ENCODE measurements at regions of chr10 and their contacts with region 1.

Region 1: GRCh38 chr10:10831085-10831484 is 186.6 kb upstream of the CELF2 start:
- DNase-seq: peak; percentile 96
- H3K4me3 ChIP-seq: peak overlapping the region in 1 of 3 experiments; percentile 2
- H3K27ac ChIP-seq: peak overlapping the region; percentile 98
- H3K4me1 ChIP-seq: peaks cover 23% of the 10 kb centered on the region
- H3K27me3 ChIP-seq: no peaks in the 10 kb centered on the region
- CTCF ChIP-seq: no peak
- POLR2A ChIP-seq: no peak

Region 2: GRCh38 chr10:10499839-10500238 is 331.2 kb before region 1 on chr10:
- CTCF ChIA-PET with region 1: no interaction called
- POLR2A ChIA-PET with region 1: no interaction called
- dilution Hi-C with region 1: no loop called
- intact Hi-C with region 1: loop called (anchors 5 kb)
- DNase-seq: peak; percentile 61
- H3K4me3 ChIP-seq: no peak overlapping the region
- H3K27ac ChIP-seq: no peak overlapping the region
- H3K4me1 ChIP-seq: peaks cover 4% of the 10 kb centered on the region
- H3K27me3 ChIP-seq: no peaks in the 10 kb centered on the region
- CTCF ChIP-seq: no peak
- POLR2A ChIP-seq: no peak

Region 3: DNA sequence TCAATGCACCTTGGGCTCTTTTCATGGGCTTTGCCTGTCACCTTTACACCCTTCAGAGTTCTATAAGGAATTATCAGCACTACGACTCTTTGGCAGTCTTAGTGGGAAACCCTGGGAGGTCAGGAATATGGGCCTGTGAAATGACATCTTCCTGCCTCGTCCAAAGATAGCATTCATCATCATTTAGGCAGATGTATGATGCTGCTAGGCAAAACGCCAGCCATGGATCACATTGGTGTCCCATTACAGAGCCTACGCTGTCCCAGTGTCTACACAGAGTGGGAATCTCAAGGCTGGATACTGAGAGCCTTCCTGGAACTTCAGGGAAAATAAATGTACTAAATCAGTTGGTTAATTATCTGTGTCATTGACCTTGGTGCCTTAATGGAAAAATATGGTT is 72.8 kb before region 1 on chr10:
- CTCF ChIA-PET with region 1: no interaction called
- POLR2A ChIA-PET with region 1: no interaction called
- dilution Hi-C with region 1: no loop called
- intact Hi-C with region 1: no loop called
- DNase-seq: no peak
- H3K4me3 ChIP-seq: no peak overlapping the region
- H3K27ac ChIP-seq: no peak overlapping the region
- H3K4me1 ChIP-seq: no peaks in the 10 kb centered on the region
- H3K27me3 ChIP-seq: no peaks in the 10 kb centered on the region
- CTCF ChIP-seq: no peak
- POLR2A ChIP-seq: no peak

Region 4: GRCh38 chr10:10786109-10787090 is 44.7 kb before region 1 on chr10:
- CTCF ChIA-PET with region 1: interaction called, 7 read pairs
- POLR2A ChIA-PET with region 1: no interaction called
- dilution Hi-C with region 1: no loop called
- intact Hi-C with region 1: loop called (anchors 1 kb)
- DNase-seq: peak; percentile 60
- H3K4me3 ChIP-seq: no peak overlapping the region
- H3K27ac ChIP-seq: peak overlapping the region; percentile 80
- H3K4me1 ChIP-seq: peaks cover 26% of the 10 kb centered on the region
- H3K27me3 ChIP-seq: no peaks in the 10 kb centered on the region
- CTCF ChIP-seq: no peak
- POLR2A ChIP-seq: no peak

Region 5: DNA sequence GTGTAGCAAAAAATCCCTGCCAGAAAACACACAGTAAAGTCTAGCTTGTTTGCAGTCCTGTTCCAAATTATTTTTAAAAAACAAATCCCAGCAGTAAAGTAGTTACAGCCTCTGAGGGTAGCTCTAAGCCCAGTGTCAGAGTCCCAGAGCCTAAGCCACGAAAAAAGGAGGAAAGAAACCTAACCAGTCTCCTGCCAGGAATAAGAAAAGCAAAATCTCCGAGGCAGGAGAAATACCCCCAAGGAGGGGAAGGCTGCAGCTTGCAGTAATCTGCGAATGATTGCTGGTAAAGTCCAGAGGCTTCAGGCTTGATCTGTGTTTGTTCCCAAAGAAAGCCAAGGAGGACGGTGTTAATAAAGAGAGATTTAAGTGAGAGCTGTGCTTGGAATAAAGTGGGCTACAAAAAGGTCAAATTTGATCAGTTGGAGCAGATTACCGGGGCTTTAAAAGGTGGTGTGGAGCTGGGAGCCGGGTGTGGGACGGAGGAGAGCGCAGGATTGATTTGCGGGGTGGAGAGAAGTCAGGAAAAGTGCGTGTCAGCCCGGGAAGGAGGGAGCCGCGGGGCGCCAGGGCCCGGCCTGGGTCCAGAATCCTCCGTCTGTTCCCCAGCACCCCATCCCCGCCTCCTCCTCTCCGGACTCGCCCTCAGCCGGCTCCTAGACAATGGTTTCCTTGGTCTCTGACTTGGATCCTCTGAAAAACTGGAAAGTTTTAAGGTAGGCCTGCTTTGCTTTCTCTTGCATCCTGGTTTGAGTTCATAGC is 32.8 kb before region 1 on chr10:
- CTCF ChIA-PET with region 1: interaction called, 4 read pairs
- POLR2A ChIA-PET with region 1: interaction called, 6 read pairs
- dilution Hi-C with region 1: no loop called
- intact Hi-C with region 1: loop called (anchors 1 kb)
- DNase-seq: peak; percentile 49
- H3K4me3 ChIP-seq: no peak overlapping the region
- H3K27ac ChIP-seq: peak overlapping the region; percentile 88
- H3K4me1 ChIP-seq: peaks cover 34% of the 10 kb centered on the region
- H3K27me3 ChIP-seq: no peaks in the 10 kb centered on the region
- CTCF ChIP-seq: no peak
- POLR2A ChIP-seq: peak; percentile 25

Region 6: DNA sequence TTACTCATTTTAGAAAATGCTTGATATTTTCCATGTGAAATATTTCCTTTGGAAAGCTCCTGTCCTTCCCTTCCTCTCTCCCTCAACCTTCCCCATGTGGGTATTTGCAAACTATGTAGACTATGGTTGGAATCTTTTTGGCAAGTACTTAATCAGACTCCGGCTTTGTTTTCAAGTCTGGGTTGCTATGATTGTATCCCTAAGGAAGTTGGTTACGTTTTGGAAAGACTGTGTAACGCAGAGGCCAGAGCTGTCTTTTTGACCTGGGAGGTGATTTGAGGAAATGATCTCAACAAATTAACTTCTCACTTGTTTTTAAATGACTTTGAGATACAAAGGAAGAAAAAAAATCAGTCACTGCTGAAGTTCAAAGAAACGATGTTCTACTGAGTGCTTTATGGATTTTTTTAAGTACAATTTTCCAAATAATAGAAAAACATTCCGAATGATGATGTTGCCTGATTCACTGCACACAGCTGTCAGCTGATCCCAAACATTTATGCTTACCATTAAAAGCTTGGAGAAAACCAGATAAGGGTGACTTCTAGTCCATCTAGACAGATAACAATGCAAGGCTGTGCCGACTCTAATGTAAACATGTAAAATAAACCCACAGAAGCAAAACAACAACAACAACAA is 41.1 kb after region 1 on chr10:
- CTCF ChIA-PET with region 1: interaction called, 8 read pairs
- POLR2A ChIA-PET with region 1: no interaction called
- dilution Hi-C with region 1: no loop called
- intact Hi-C with region 1: loop called (anchors 1 kb)
- DNase-seq: peak; percentile 99
- H3K4me3 ChIP-seq: peak overlapping the region in 1 of 3 experiments; percentile 25
- H3K27ac ChIP-seq: peak overlapping the region; percentile 99
- H3K4me1 ChIP-seq: peaks cover 35% of the 10 kb centered on the region
- H3K27me3 ChIP-seq: no peaks in the 10 kb centered on the region
- CTCF ChIP-seq: no peak
- POLR2A ChIP-seq: no peak

Region 7: GRCh38 chr10:10919976-10920375 is 88.9 kb after region 1 on chr10:
- CTCF ChIA-PET with region 1: no interaction called
- POLR2A ChIA-PET with region 1: no interaction called
- dilution Hi-C with region 1: no loop called
- intact Hi-C with region 1: no loop called
- DNase-seq: no peak
- H3K4me3 ChIP-seq: no peak overlapping the region
- H3K27ac ChIP-seq: no peak overlapping the region
- H3K4me1 ChIP-seq: no peaks in the 10 kb centered on the region
- H3K27me3 ChIP-seq: no peaks in the 10 kb centered on the region
- CTCF ChIP-seq: no peak
- POLR2A ChIP-seq: no peak